CD8-positive, alpha-beta T cell (primary cell): ENCODE measurements at regions of chr11 and their contacts with region 1.

Region 1: DNA sequence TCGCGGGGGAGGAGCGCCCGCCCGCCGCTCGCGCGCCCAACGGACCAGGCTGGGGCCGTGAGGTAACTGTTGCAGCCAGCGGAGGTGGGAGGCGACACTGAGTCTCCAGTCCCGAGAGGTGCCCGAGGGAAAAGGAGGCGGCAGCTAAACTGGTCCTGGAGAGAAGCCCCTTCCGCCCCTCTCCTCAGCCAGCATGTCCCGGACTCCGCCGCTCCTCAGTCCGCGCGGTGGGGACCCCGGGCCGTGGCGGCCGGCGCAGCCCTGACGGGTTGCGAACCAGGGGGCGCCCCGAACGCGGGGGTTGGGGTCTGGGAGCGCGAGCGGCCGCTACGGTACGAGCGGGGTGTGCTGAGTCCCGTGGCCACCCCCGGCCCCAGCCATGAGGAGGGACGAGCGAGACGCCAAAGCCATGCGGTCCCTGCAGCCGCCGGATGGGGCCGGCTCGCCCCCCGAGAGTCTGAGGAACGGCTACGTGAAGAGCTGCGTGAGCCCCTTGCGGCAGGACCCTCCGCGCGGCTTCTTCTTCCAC is at the start of gene PDE3B:
- DNase-seq: peak; percentile 57 to 87 (median 74)
- ATAC-seq: peak; percentile 53
- H3K4me3 ChIP-seq: peak within 1 kb of the TSS; percentile 86 to 95
- H3K4me3 Mint-ChIP-seq: peak within 1 kb of the TSS; percentile 91
- H3K27ac ChIP-seq: peak within 1 kb of the TSS; percentile 66 to 86
- H3K27ac Mint-ChIP-seq: peak within 1 kb of the TSS; percentile 91
- H3K4me1 ChIP-seq: peaks cover 41% of the 10 kb centered on the region
- H3K4me1 Mint-ChIP-seq: peaks cover 54% of the 10 kb centered on the region
- H3K27me3 ChIP-seq: no peaks in the 10 kb centered on the region
- H3K27me3 Mint-ChIP-seq: no peaks in the 10 kb centered on the region
- CTCF ChIP-seq: no peak
- total RNA-seq, gene PDE3B: 144 to 146 TPM

Region 2: DNA sequence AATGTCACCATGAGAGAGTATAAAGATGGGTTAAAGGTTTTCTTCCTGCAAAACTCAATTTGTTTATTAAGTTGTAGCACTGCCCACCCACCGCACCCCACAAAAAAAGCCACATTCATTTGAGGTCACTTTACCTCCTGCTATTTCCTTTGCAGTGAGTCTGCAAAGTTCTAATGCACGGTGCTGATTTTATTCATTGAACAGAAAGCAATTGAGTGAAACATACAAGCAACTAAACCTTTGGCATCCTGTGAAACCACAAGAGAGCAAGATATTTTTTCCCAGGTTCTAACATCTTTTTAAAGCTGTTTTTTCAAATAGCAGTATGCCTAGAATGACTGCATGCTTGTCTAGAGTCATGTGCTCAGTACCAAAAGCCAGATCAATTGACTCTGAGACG is 323.7 kb before region 1 on chr11:
- CTCF ChIA-PET with region 1: no interaction called
- POLR2A ChIA-PET with region 1: no interaction called
- intact Hi-C with region 1: no loop called
- DNase-seq: peak in 8 of 9 experiments; percentile 9 to 82 (median 44)
- ATAC-seq: peak; percentile 83
- H3K4me3 ChIP-seq: no peak overlapping the region
- H3K4me3 Mint-ChIP-seq: peak overlapping the region; percentile 0
- H3K27ac ChIP-seq: peak overlapping the region in 1 of 2 experiments; percentile 1
- H3K27ac Mint-ChIP-seq: peak overlapping the region; percentile 25
- H3K4me1 ChIP-seq: peaks cover 21% of the 10 kb centered on the region
- H3K4me1 Mint-ChIP-seq: peaks cover 72% of the 10 kb centered on the region
- H3K27me3 ChIP-seq: no peaks in the 10 kb centered on the region
- H3K27me3 Mint-ChIP-seq: no peaks in the 10 kb centered on the region
- CTCF ChIP-seq: no peak

Region 3: GRCh38 chr11:14537134-14537599 is 106.6 kb before region 1 on chr11:
- CTCF ChIA-PET with region 1: interaction called, 19 read pairs
- POLR2A ChIA-PET with region 1: interaction called, 11 read pairs
- intact Hi-C with region 1: loop called (anchors 1 kb)
- DNase-seq: peak; percentile 19 to 76 (median 50)
- ATAC-seq: peak; percentile 85
- H3K4me3 ChIP-seq: no peak overlapping the region
- H3K4me3 Mint-ChIP-seq: peak overlapping the region; percentile 77
- H3K27ac ChIP-seq: peak overlapping the region in 1 of 2 experiments; percentile 25
- H3K27ac Mint-ChIP-seq: peak overlapping the region; percentile 87
- H3K4me1 ChIP-seq: peaks cover 15% of the 10 kb centered on the region
- H3K4me1 Mint-ChIP-seq: peaks cover 38% of the 10 kb centered on the region
- H3K27me3 ChIP-seq: no peaks in the 10 kb centered on the region
- H3K27me3 Mint-ChIP-seq: no peaks in the 10 kb centered on the region
- CTCF ChIP-seq: peak; percentile 92

Region 4: GRCh38 chr11:14566331-14567063 is 77.3 kb before region 1 on chr11:
- CTCF ChIA-PET with region 1: interaction called, 11 read pairs
- POLR2A ChIA-PET with region 1: interaction called, 5 read pairs
- intact Hi-C with region 1: no loop called
- DNase-seq: no peak
- ATAC-seq: no peak
- H3K4me3 ChIP-seq: no peak overlapping the region
- H3K4me3 Mint-ChIP-seq: no peak overlapping the region
- H3K27ac ChIP-seq: no peak overlapping the region
- H3K27ac Mint-ChIP-seq: peak overlapping the region; percentile 66
- H3K4me1 ChIP-seq: peaks cover 40% of the 10 kb centered on the region
- H3K4me1 Mint-ChIP-seq: peaks cover 69% of the 10 kb centered on the region
- H3K27me3 ChIP-seq: no peaks in the 10 kb centered on the region
- H3K27me3 Mint-ChIP-seq: no peaks in the 10 kb centered on the region
- CTCF ChIP-seq: no peak

Region 5: GRCh38 chr11:14656536-14657457 is 13.0 kb after region 1 on chr11:
- CTCF ChIA-PET with region 1: interaction called, 4 read pairs
- POLR2A ChIA-PET with region 1: interaction called, 8 read pairs
- intact Hi-C with region 1: loop called in 1 of 2 experiments (anchors 2 kb)
- DNase-seq: no peak
- ATAC-seq: no peak
- H3K4me3 ChIP-seq: no peak overlapping the region
- H3K4me3 Mint-ChIP-seq: no peak overlapping the region
- H3K27ac ChIP-seq: no peak overlapping the region
- H3K27ac Mint-ChIP-seq: peak overlapping the region; percentile 57
- H3K4me1 ChIP-seq: peaks cover 41% of the 10 kb centered on the region
- H3K4me1 Mint-ChIP-seq: peaks cover 74% of the 10 kb centered on the region
- H3K27me3 ChIP-seq: no peaks in the 10 kb centered on the region
- H3K27me3 Mint-ChIP-seq: no peaks in the 10 kb centered on the region
- CTCF ChIP-seq: no peak

Region 6: DNA sequence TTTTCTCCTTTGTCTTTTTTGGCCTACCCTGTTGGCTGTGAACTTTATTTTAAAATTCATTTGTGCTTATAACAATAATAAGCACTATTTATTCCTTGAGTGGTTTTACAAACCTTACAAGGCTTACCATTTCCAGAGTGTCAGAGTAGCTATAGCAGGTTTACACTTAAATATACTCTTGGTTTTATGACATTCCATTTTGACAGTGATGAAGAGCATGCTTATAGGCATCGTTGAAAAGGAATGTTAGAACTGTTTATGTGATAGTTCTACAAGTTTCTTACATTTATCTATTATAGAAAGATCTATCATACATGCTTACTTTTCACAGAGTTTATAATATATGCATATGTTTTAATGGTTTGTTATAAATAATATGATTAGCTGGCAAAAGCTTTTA is 84.0 kb after region 1 on chr11:
- CTCF ChIA-PET with region 1: no interaction called
- POLR2A ChIA-PET with region 1: interaction called, 10 read pairs
- intact Hi-C with region 1: no loop called
- DNase-seq: no peak
- ATAC-seq: no peak
- H3K4me3 ChIP-seq: no peak overlapping the region
- H3K4me3 Mint-ChIP-seq: no peak overlapping the region
- H3K27ac ChIP-seq: no peak overlapping the region
- H3K27ac Mint-ChIP-seq: peak overlapping the region; percentile 9
- H3K4me1 ChIP-seq: peaks cover 50% of the 10 kb centered on the region
- H3K4me1 Mint-ChIP-seq: peaks cover 76% of the 10 kb centered on the region
- H3K27me3 ChIP-seq: no peaks in the 10 kb centered on the region
- H3K27me3 Mint-ChIP-seq: no peaks in the 10 kb centered on the region
- CTCF ChIP-seq: no peak

Region 7: GRCh38 chr11:14789879-14790484 is 146.2 kb after region 1 on chr11:
- CTCF ChIA-PET with region 1: no interaction called
- POLR2A ChIA-PET with region 1: no interaction called
- intact Hi-C with region 1: loop called in 1 of 2 experiments (anchors 5 kb)
- DNase-seq: peak in 2 of 9 experiments; percentile 35 to 54
- ATAC-seq: no peak
- H3K4me3 ChIP-seq: no peak overlapping the region
- H3K4me3 Mint-ChIP-seq: no peak overlapping the region
- H3K27ac ChIP-seq: no peak overlapping the region
- H3K27ac Mint-ChIP-seq: peak overlapping the region; percentile 79
- H3K4me1 ChIP-seq: peaks cover 2% of the 10 kb centered on the region
- H3K4me1 Mint-ChIP-seq: peaks cover 31% of the 10 kb centered on the region
- H3K27me3 ChIP-seq: no peaks in the 10 kb centered on the region
- H3K27me3 Mint-ChIP-seq: no peaks in the 10 kb centered on the region
- CTCF ChIP-seq: peak; percentile 68

Region 8: GRCh38 chr11:14953904-14954303 is 310.1 kb after region 1 on chr11:
- CTCF ChIA-PET with region 1: no interaction called
- POLR2A ChIA-PET with region 1: no interaction called
- intact Hi-C with region 1: no loop called
- DNase-seq: no peak
- ATAC-seq: no peak
- H3K4me3 ChIP-seq: no peak overlapping the region
- H3K4me3 Mint-ChIP-seq: no peak overlapping the region
- H3K27ac ChIP-seq: no peak overlapping the region
- H3K27ac Mint-ChIP-seq: no peak overlapping the region
- H3K4me1 ChIP-seq: no peaks in the 10 kb centered on the region
- H3K4me1 Mint-ChIP-seq: no peaks in the 10 kb centered on the region
- H3K27me3 ChIP-seq: no peaks in the 10 kb centered on the region
- H3K27me3 Mint-ChIP-seq: no peaks in the 10 kb centered on the region
- CTCF ChIP-seq: no peak

Region 9: GRCh38 chr11:15011776-15012175 is 368.0 kb after region 1 on chr11:
- CTCF ChIA-PET with region 1: no interaction called
- POLR2A ChIA-PET with region 1: no interaction called
- intact Hi-C with region 1: no loop called
- DNase-seq: no peak
- ATAC-seq: no peak
- H3K4me3 ChIP-seq: no peak overlapping the region
- H3K4me3 Mint-ChIP-seq: no peak overlapping the region
- H3K27ac ChIP-seq: no peak overlapping the region
- H3K27ac Mint-ChIP-seq: no peak overlapping the region
- H3K4me1 ChIP-seq: no peaks in the 10 kb centered on the region
- H3K4me1 Mint-ChIP-seq: no peaks in the 10 kb centered on the region
- H3K27me3 ChIP-seq: no peaks in the 10 kb centered on the region
- H3K27me3 Mint-ChIP-seq: peaks cover 31% of the 10 kb centered on the region
- CTCF ChIP-seq: no peak

Region 10: GRCh38 chr11:15074206-15075161 is 430.7 kb after region 1 on chr11:
- CTCF ChIA-PET with region 1: no interaction called
- POLR2A ChIA-PET with region 1: no interaction called
- intact Hi-C with region 1: loop called in 1 of 2 experiments (anchors 10 kb)
- DNase-seq: peak; percentile 64 to 89 (median 80)
- ATAC-seq: peak; percentile 91
- H3K4me3 ChIP-seq: peak overlapping the region; percentile 39 to 60
- H3K4me3 Mint-ChIP-seq: peak overlapping the region; percentile 84
- H3K27ac ChIP-seq: no peak overlapping the region
- H3K27ac Mint-ChIP-seq: no peak overlapping the region
- H3K4me1 ChIP-seq: peaks cover 18% of the 10 kb centered on the region
- H3K4me1 Mint-ChIP-seq: peaks cover 12% of the 10 kb centered on the region
- H3K27me3 ChIP-seq: peaks cover 9 to 16% of the 10 kb centered on the region in 2 experiments
- H3K27me3 Mint-ChIP-seq: peaks cover 27% of the 10 kb centered on the region
- CTCF ChIP-seq: peak; percentile 79